ENCODE measurements at regions of chr13 and their contacts with region 1.

Region 1: GRCh38 chr13:35720690-35721554 is 244.4 kb upstream of the MAB21L1 start:
- DNase-seq: no peak
- H3K4me3 ChIP-seq: 0 out of 2 replicates have a peak overlapping the region, but pooled peaks have one; percentile 6
- H3K27me3 ChIP-seq: no peaks in the 10 kb centered on the region
- CTCF ChIP-seq: peak; percentile 98

Region 2: DNA sequence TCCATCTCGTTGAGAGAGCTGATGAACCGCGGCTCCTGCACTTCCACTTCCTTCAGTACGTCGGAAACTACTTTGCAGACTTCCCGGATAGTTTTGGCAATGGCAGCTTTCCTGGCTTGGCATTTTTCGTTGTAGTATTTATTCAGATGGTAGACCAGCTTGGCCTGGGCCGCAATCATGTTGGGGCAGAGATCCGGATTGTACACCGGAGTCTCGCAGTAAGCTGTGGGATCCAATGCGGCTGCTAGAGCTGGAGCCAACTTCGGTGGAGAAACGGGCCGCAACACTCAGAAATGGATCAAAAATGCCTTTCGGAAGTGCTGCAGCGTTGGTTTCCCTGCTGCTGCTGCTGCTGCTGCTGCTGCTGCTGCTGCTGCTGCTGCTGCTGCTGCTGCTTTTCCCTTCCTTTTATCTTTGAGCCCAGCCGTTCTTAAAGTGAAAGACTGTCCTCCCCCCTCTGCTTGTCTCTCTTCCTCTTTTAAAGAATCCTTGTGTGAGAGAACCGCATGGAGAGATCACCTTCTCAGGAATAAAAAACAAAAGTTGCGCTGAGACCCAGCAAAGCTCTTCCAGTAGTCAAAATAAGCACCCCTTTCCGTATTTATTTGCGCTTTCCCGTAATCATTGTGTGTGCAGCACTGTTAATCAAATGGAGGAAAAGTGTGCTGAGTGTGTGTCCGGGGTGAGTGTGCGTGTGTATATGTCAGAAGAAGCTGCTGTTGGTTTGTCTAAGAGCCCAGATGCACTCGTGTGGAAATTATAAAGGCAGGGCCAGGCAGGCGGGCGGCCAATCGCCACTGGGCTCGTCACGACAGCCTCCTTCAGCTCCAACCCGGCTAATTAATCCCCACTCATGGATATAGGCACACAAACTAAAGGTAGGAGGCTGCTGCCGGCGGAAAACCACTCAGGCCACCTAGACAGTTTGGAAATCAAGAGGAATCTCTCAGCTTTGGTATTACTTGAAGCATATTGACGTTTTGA is 244.7 kb before region 1 on chr13 and contains the start of gene MAB21L1:
- CTCF ChIA-PET with region 1: interaction called, 14 read pairs
- POLR2A ChIA-PET with region 1: interaction called, 14 read pairs
- DNase-seq: peak; percentile 83
- H3K4me3 ChIP-seq: peak within 1 kb of the TSS; percentile 94
- H3K27me3 ChIP-seq: no peaks in the 10 kb centered on the region
- CTCF ChIP-seq: no peak
- polyA plus RNA-seq, gene MAB21L1: 65.6 and 67.9 TPM in 2 replicates

Region 3: GRCh38 chr13:35630551-35631275 is 90.2 kb before region 1 on chr13:
- CTCF ChIA-PET with region 1: interaction called, 35 read pairs
- POLR2A ChIA-PET with region 1: no interaction called
- DNase-seq: no peak
- H3K4me3 ChIP-seq: no peak overlapping the region
- H3K27me3 ChIP-seq: no peaks in the 10 kb centered on the region
- CTCF ChIP-seq: peak; percentile 84

Region 4: DNA sequence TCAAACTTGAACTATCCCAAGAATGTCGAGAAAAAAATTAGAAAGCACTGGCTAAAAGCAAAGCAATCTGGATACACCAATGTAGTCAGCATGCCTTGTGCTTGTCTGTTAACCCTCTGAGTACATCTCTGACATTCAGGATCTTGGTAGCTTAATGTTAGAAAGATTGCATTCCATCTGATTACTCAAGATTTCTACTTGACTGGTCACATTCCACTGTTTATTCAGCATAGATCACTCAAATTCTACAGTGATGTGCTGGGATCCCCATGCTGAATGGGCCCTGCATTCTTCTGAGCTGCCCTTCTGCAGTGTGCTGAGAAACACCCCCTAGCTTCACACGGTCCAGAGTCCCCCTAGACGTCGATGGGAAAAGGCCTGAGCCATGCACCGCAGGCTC is 51.0 kb after region 1 on chr13:
- CTCF ChIA-PET with region 1: interaction called, 11 read pairs
- POLR2A ChIA-PET with region 1: interaction called, 3 read pairs
- DNase-seq: peak; percentile 88
- H3K4me3 ChIP-seq: no peak overlapping the region
- H3K27me3 ChIP-seq: no peaks in the 10 kb centered on the region
- CTCF ChIP-seq: no peak

Region 5: GRCh38 chr13:35789335-35790165 is 68.6 kb after region 1 on chr13:
- CTCF ChIA-PET with region 1: interaction called, 48 read pairs
- POLR2A ChIA-PET with region 1: interaction called, 3 read pairs
- DNase-seq: no peak
- H3K4me3 ChIP-seq: no peak overlapping the region
- H3K27me3 ChIP-seq: no peaks in the 10 kb centered on the region
- CTCF ChIP-seq: peak; percentile 60

Region 6: DNA sequence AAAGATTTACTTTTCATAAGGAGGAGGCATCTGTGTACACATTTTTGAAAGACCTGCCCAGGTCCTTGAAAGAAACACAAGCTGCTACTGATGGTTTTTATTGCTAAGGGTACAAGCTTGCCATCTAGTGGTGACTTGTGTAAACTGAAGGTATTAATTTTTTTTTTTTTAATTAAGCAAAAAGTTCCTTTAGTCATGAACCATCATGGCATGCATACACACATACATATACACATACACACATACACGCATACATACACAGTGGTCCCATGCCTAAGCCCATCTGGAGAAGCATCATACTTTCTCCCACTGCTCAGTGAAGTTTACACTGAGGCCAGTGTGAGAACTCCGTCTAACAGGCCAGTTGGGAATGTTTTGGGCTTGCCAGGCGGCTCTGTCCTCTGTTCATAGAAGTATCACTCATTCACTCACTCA is 97.7 kb after region 1 on chr13:
- CTCF ChIA-PET with region 1: interaction called, 15 read pairs
- POLR2A ChIA-PET with region 1: no interaction called
- DNase-seq: no peak
- H3K4me3 ChIP-seq: no peak overlapping the region
- H3K27me3 ChIP-seq: no peaks in the 10 kb centered on the region
- CTCF ChIP-seq: peak; percentile 69

Measured in BJ (cell line).